ENCODE measurements at regions of chr5 and their contacts with region 1.

Region 1: GRCh38 chr5:138824924-138825863 is 49.9 kb downstream of the LRRTM2 start:
- DNase-seq: no peak
- H3K4me3 Mint-ChIP-seq: no peak overlapping the region
- H3K27ac Mint-ChIP-seq: no peak overlapping the region
- H3K4me1 Mint-ChIP-seq: no peaks in the 10 kb centered on the region
- H3K27me3 Mint-ChIP-seq: peaks cover 16% of the 10 kb centered on the region

Region 2: DNA sequence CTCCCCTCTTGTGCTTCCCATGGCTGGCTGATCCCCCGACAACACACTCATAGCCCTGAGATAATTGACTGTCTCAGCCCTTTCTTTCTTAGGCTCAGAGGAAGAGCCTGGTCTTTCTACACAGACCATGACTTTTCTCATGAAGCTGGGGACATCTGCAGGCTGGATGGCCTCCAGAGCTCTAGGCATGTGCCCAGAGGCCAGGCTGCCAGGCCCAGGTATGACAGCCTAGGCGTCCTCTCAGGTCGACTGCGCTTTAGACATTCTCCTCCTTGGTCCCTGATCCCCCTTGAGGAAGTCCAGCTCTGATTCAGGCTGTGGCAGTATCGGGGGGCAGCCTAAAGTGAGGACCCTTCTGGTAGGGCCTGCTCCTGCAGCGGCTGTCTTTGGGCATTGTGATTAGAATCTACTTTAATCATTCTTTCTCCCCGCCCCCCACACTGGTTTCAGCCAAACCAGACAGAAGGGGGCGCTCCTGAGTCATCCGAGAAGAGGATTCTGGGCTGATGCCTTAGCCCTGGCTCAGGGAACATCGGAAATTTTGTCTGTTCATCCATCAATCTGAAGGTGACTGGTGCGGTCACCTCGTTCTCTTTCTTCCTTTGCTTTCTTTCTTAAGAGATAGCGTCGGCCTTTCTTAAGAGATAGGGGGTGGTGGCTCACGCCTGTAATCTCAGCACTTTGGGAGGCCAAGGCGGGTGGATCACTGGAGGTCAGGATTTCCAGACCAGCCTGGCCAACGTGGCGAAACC is 183.5 kb before region 1 on chr5:
- CTCF ChIA-PET with region 1: no interaction called
- intact Hi-C with region 1: loop called (anchors 5 kb)
- DNase-seq: peak; percentile 88
- H3K4me3 Mint-ChIP-seq: no peak overlapping the region
- H3K27ac Mint-ChIP-seq: no peak overlapping the region
- H3K4me1 Mint-ChIP-seq: no peaks in the 10 kb centered on the region
- H3K27me3 Mint-ChIP-seq: peaks cover 60% of the 10 kb centered on the region

Region 3: GRCh38 chr5:138844812-138845513 is 19.8 kb after region 1 on chr5:
- CTCF ChIA-PET with region 1: interaction called, 13 read pairs
- intact Hi-C with region 1: no loop called
- DNase-seq: no peak
- H3K4me3 Mint-ChIP-seq: no peak overlapping the region
- H3K27ac Mint-ChIP-seq: no peak overlapping the region
- H3K4me1 Mint-ChIP-seq: peaks cover 3% of the 10 kb centered on the region
- H3K27me3 Mint-ChIP-seq: peaks cover 2% of the 10 kb centered on the region

Region 4: GRCh38 chr5:139027150-139027549 is 202.0 kb after region 1 on chr5:
- CTCF ChIA-PET with region 1: no interaction called
- intact Hi-C with region 1: no loop called
- DNase-seq: no peak
- H3K4me3 Mint-ChIP-seq: no peak overlapping the region
- H3K27ac Mint-ChIP-seq: no peak overlapping the region
- H3K4me1 Mint-ChIP-seq: peaks cover 5% of the 10 kb centered on the region
- H3K27me3 Mint-ChIP-seq: no peaks in the 10 kb centered on the region

Region 5: DNA sequence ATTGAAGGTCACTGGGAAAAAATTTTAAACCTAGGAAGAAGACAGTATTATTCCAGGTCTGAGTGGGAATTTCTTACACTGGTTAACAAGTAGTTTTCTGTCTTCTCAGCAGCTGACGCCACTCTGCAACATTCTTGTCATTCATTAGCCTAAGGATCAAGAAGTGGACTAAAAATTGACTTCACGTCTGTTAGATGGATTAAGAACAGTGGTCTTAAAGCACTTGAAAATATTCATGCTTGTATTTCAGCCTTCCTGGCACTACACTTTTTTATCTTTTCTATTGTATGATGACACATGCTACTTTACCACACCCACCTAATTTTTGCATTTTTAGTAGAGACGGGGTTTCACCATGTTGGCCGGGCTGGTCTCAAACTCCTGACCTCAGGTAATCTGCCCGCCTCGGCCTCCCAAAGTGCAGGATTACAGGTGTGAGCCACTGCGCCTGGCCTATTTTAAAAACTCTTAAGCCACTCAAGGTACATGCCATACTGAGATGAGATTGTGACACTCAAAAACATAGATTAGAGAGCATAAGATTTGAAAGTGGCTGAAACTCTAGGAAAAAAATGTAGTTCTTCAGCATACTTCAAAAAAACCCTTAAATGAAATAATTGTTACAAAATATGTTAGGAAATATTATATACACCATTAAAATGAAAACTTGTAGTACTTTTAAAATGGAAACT is 476.8 kb after region 1 on chr5:
- CTCF ChIA-PET with region 1: no interaction called
- intact Hi-C with region 1: no loop called
- DNase-seq: no peak
- H3K4me3 Mint-ChIP-seq: no peak overlapping the region
- H3K27ac Mint-ChIP-seq: peak overlapping the region; percentile 76
- H3K4me1 Mint-ChIP-seq: peaks cover 89% of the 10 kb centered on the region
- H3K27me3 Mint-ChIP-seq: no peaks in the 10 kb centered on the region